Calu3 (cell line): ENCODE measurements at regions of chr18 and their contacts with region 1.

Region 1: GRCh38 chr18:30352563-30353168 is 689.9 kb downstream of the DSC3 start:
- DNase-seq: no peak
- H3K4me3 Mint-ChIP-seq: no peak overlapping the region
- H3K27ac Mint-ChIP-seq: no peak overlapping the region
- H3K4me1 Mint-ChIP-seq: no peaks in the 10 kb centered on the region
- H3K27me3 Mint-ChIP-seq: no peaks in the 10 kb centered on the region
- CTCF ChIP-seq: no peak

Region 2: DNA sequence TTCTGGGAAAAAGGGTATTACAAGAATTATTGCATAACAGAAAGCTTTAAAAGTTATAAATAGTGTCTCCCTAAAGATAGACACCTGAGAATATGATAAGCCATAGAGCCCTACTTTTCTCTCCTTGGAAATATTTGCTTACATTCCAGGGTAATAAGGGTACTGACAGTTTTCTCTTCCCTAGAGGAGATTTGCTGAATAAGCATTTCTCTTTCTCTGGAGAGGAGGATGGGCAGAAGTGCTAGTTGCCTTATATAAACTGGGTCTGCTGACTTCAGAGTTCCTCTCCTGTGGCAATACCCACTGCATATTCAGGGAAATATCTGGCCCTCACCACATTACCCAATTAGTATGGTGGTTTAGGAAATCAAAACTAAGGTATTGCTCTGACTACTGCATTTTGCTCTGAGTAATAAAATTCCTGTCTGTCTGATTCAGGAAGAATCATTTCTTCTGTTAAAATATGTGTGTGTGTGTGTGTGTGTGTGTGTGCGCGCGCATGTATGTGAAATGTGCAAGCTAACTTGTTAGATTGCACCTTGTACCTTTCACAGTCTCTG is 701.5 kb before region 1 on chr18:
- CTCF ChIA-PET with region 1: no interaction called
- intact Hi-C with region 1: no loop called
- DNase-seq: no peak
- H3K4me3 Mint-ChIP-seq: no peak overlapping the region
- H3K27ac Mint-ChIP-seq: no peak overlapping the region
- H3K4me1 Mint-ChIP-seq: no peaks in the 10 kb centered on the region
- H3K27me3 Mint-ChIP-seq: no peaks in the 10 kb centered on the region
- CTCF ChIP-seq: no peak

Region 3: DNA sequence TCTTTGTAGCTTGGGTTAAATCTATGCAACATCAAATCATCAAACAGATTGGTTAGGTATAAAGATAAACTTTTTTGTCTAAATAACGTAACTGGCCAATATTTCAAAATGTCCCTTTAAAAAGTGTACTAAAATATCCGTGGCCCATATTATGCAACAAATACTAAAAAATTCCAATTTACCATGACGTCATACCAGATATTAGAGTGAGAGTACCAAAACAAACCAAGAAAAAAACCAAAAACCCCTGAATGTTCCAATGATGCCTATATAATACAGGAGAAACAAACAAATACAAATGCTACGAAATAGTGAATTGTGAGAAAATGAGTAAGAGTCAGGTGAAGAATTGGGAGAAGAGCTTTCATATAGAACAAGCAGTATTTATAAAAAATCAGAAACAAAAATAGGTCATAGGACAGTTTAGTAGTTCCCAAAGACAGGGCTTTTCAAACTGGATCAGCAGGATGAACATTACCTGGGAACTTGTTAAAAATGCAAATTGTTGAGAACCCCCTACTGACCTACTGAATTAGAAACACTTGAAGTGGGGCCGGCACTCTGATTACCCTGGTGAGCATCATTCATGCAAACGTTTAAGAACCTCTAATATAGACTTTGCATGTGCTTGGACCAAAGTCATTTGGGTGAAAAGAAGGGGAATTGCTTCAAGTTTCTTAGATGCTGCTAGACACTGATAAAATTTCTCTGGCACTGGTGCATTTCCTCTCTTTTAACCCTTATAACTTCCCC is 63.8 kb before region 1 on chr18:
- CTCF ChIA-PET with region 1: no interaction called
- intact Hi-C with region 1: no loop called
- DNase-seq: no peak
- H3K4me3 Mint-ChIP-seq: no peak overlapping the region
- H3K27ac Mint-ChIP-seq: no peak overlapping the region
- H3K4me1 Mint-ChIP-seq: no peaks in the 10 kb centered on the region
- H3K27me3 Mint-ChIP-seq: no peaks in the 10 kb centered on the region
- CTCF ChIP-seq: no peak

Region 4: DNA sequence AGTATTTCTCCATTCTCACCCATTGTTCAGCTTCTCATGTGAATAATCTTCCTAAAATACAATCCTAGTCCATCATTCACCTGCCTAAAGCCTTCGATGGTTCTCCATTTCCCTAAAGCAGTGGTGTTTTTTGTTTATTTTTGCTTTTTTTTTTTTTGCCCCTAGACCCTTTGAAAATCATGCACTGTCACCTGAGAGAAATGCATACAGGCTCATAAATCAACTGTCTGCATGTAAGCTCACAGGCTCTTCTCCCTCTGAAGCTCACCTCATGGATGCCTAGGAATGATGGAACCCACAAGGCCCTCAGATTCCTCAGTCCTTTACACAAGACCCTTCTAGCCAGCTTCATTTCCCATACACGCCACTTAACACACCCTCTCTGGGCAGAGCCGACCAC is 1300.2 kb after region 1 on chr18:
- CTCF ChIA-PET with region 1: interaction called, 11 read pairs
- intact Hi-C with region 1: no loop called
- DNase-seq: no peak
- H3K4me3 Mint-ChIP-seq: no peak overlapping the region
- H3K27ac Mint-ChIP-seq: no peak overlapping the region
- H3K4me1 Mint-ChIP-seq: no peaks in the 10 kb centered on the region
- H3K27me3 Mint-ChIP-seq: no peaks in the 10 kb centered on the region
- CTCF ChIP-seq: no peak